PC-9 (cell line): ENCODE measurements at regions of chr5 and their contacts with region 1.

Region 1: GRCh38 chr5:65481635-65482295 is at the start of gene ADAMTS6:
- DNase-seq: peak in 1 of 2 experiments; percentile 58
- H3K4me3 ChIP-seq: peak within 1 kb of the TSS; percentile 85
- H3K27ac ChIP-seq: 0 out of 2 replicates have a peak within 1 kb of the TSS, but pooled peaks have one; percentile 2
- H3K4me1 ChIP-seq: peaks cover 26% of the 10 kb centered on the region
- H3K27me3 ChIP-seq: no peaks in the 10 kb centered on the region
- CTCF ChIP-seq: no peak
- total RNA-seq, gene ADAMTS6: 1.4 and 2.1 TPM in 2 replicates

Region 2: GRCh38 chr5:64811050-64811640 is 670.6 kb before region 1 on chr5:
- CTCF ChIA-PET with region 1: interaction called, 21 read pairs
- POLR2A ChIA-PET with region 1: interaction called, 12 read pairs
- intact Hi-C with region 1: loop called (anchors 1 kb)
- DNase-seq: no peak
- H3K4me3 ChIP-seq: no peak overlapping the region
- H3K27ac ChIP-seq: no peak overlapping the region
- H3K4me1 ChIP-seq: no peaks in the 10 kb centered on the region
- H3K27me3 ChIP-seq: no peaks in the 10 kb centered on the region
- CTCF ChIP-seq: peak; percentile 82

Region 3: GRCh38 chr5:64939522-64940510 is 541.9 kb before region 1 on chr5:
- CTCF ChIA-PET with region 1: no interaction called
- POLR2A ChIA-PET with region 1: no interaction called
- intact Hi-C with region 1: loop called (anchors 5 kb)
- DNase-seq: peak; percentile 62 to 65
- H3K4me3 ChIP-seq: peak overlapping the region; percentile 36; the same call in 1 of the 2 replicates
- H3K27ac ChIP-seq: peak overlapping the region; percentile 62
- H3K4me1 ChIP-seq: no peaks in the 10 kb centered on the region
- H3K27me3 ChIP-seq: no peaks in the 10 kb centered on the region
- CTCF ChIP-seq: no peak

Region 4: DNA sequence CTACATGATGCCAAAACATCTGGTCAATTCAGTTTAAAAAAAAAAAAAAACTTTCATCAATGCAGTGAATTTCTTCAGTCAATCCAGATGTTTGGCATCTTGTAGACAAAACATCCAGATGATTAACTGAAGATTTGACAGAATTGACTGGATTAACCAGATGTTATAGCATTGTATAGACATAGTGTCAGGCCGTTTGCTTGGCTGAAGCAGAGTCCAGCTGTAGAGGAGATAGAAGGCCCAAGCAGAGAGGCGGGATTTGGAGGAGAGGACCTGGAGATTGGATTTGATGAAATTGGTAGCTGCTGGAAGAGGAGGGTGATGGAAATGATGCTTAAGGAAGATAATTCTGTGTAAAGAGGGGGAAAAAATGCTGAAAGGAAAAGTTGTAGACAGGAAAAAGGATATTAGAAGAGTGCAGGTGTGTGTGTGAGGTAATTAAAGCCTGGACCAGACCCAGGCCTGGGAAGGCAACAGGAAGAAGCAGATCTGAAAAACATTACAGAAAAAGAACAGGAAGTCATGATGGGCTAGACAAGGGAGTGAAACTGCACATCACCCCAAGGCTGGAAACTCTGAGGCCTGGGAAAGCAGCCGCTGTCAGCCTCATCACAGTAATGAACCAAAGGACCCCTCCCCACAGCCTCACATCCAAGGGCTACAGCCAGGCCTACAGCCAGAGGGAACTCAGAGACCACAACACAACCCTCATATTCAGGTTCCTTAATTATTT is 454.8 kb before region 1 on chr5:
- CTCF ChIA-PET with region 1: no interaction called
- POLR2A ChIA-PET with region 1: no interaction called
- intact Hi-C with region 1: no loop called
- DNase-seq: no peak
- H3K4me3 ChIP-seq: no peak overlapping the region
- H3K27ac ChIP-seq: no peak overlapping the region
- H3K4me1 ChIP-seq: no peaks in the 10 kb centered on the region
- H3K27me3 ChIP-seq: no peaks in the 10 kb centered on the region
- CTCF ChIP-seq: no peak

Region 5: DNA sequence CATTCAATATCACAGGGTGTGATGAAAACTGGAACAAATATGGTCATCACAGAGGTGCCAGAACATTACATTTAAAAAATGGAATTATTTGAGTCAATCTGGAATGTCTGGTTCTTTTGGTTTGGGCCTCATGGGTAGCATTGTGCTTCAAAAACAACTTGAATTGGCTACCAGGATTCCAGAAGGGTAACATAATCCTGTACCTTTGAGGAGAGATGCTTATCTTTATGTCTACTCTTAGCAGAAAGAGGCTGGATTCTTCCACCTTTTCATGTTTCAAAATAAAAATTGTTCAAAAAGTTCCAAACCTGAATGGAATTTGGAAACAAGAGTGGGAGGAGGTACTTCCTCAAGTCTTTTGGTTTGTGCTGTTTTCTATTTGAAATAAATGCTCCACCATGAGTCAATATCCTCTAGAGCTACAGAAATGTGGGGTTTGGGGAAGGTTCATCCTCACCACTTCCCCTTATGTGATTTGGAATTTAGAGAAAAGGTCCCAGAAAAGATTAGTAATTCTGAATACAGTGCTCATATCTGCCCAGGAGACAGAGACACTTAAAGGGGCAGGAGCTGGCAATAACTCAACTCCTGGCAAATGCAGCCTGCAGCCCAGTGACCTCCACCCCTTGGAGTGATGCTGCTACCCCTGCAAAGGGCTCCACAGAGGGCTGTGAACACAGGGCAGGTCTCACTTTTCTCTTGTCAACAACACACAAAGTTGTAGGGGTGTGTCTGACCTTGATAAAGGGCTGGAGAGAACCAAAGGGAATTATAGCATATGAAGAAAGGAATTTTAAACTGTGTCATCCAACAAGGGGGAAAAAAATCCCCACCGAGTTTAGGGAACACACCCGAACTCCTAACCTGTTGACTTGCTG is 440.2 kb before region 1 on chr5:
- CTCF ChIA-PET with region 1: no interaction called
- POLR2A ChIA-PET with region 1: no interaction called
- intact Hi-C with region 1: loop called (anchors 1 kb)
- DNase-seq: peak; percentile 4 to 37
- H3K4me3 ChIP-seq: peak overlapping the region; percentile 8; the same call in 1 of the 2 replicates
- H3K27ac ChIP-seq: peak overlapping the region; percentile 55
- H3K4me1 ChIP-seq: peaks cover 23% of the 10 kb centered on the region
- H3K27me3 ChIP-seq: no peaks in the 10 kb centered on the region
- CTCF ChIP-seq: no peak

Region 6: GRCh38 chr5:65198456-65199120 is 283.2 kb before region 1 on chr5:
- CTCF ChIA-PET with region 1: no interaction called
- POLR2A ChIA-PET with region 1: no interaction called
- intact Hi-C with region 1: loop called (anchors 2 kb)
- DNase-seq: peak; percentile 35 to 69
- H3K4me3 ChIP-seq: no peak overlapping the region
- H3K27ac ChIP-seq: peak overlapping the region; percentile 23
- H3K4me1 ChIP-seq: peaks cover 19% of the 10 kb centered on the region
- H3K27me3 ChIP-seq: no peaks in the 10 kb centered on the region
- CTCF ChIP-seq: no peak

Region 7: GRCh38 chr5:65305913-65306312 is 175.9 kb before region 1 on chr5:
- CTCF ChIA-PET with region 1: no interaction called
- POLR2A ChIA-PET with region 1: no interaction called
- intact Hi-C with region 1: no loop called
- DNase-seq: no peak
- H3K4me3 ChIP-seq: no peak overlapping the region
- H3K27ac ChIP-seq: no peak overlapping the region
- H3K4me1 ChIP-seq: peaks cover 19% of the 10 kb centered on the region
- H3K27me3 ChIP-seq: no peaks in the 10 kb centered on the region
- CTCF ChIP-seq: no peak

Region 8: GRCh38 chr5:65434122-65434521 is 47.6 kb before region 1 on chr5:
- CTCF ChIA-PET with region 1: no interaction called
- POLR2A ChIA-PET with region 1: no interaction called
- intact Hi-C with region 1: no loop called
- DNase-seq: no peak
- H3K4me3 ChIP-seq: no peak overlapping the region
- H3K27ac ChIP-seq: no peak overlapping the region
- H3K4me1 ChIP-seq: no peaks in the 10 kb centered on the region
- H3K27me3 ChIP-seq: no peaks in the 10 kb centered on the region
- CTCF ChIP-seq: no peak

Region 9: DNA sequence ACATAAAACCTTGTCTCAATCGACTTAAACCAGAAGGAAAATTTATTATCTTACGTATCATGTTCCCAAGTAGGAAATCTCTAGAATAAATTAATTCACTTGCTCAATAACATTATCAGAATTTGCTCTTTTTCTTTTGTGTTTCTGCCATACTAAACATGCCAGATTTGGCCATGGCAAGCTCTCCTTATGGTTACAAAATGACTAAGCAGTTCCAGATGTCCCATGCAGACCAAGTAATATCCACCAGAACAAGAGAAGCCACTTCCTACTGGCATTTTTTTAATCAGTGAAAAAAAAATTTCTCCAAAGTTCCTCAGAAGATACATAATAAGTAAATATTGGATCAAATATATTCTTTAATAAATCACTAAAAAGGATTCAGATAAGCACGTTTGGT is 25.2 kb after region 1 on chr5:
- CTCF ChIA-PET with region 1: interaction called, 11 read pairs
- POLR2A ChIA-PET with region 1: no interaction called
- intact Hi-C with region 1: no loop called
- DNase-seq: no peak
- H3K4me3 ChIP-seq: no peak overlapping the region
- H3K27ac ChIP-seq: no peak overlapping the region
- H3K4me1 ChIP-seq: no peaks in the 10 kb centered on the region
- H3K27me3 ChIP-seq: no peaks in the 10 kb centered on the region
- CTCF ChIP-seq: no peak

Region 10: DNA sequence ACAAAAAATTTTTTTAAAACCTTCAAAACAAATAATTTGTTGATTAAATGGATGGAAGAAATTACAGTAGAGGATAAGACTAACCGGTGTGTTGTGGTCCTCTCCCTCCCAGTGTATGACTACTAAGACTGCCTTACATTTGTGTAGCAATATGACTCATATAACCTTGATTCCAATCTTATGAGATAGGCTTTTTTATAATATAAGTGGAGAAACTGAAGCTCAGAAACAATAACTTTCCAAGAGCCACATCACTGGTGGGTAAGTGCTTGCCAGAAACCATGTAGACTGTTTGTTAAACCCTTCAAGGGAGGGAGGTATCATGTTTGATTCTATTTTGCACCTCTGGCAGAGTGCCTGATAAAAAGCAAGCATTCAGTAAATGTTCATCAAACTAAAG is 287.8 kb after region 1 on chr5:
- CTCF ChIA-PET with region 1: no interaction called
- POLR2A ChIA-PET with region 1: no interaction called
- intact Hi-C with region 1: no loop called
- DNase-seq: peak in 1 of 2 experiments; percentile 41
- H3K4me3 ChIP-seq: no peak overlapping the region
- H3K27ac ChIP-seq: no peak overlapping the region
- H3K4me1 ChIP-seq: 0 out of 2 replicates have a peak, but pooled peaks cover 2% of the 10 kb centered on the region
- H3K27me3 ChIP-seq: no peaks in the 10 kb centered on the region
- CTCF ChIP-seq: no peak